ENCODE measurements at regions of chr7 and their contacts with region 1.

Region 1: DNA sequence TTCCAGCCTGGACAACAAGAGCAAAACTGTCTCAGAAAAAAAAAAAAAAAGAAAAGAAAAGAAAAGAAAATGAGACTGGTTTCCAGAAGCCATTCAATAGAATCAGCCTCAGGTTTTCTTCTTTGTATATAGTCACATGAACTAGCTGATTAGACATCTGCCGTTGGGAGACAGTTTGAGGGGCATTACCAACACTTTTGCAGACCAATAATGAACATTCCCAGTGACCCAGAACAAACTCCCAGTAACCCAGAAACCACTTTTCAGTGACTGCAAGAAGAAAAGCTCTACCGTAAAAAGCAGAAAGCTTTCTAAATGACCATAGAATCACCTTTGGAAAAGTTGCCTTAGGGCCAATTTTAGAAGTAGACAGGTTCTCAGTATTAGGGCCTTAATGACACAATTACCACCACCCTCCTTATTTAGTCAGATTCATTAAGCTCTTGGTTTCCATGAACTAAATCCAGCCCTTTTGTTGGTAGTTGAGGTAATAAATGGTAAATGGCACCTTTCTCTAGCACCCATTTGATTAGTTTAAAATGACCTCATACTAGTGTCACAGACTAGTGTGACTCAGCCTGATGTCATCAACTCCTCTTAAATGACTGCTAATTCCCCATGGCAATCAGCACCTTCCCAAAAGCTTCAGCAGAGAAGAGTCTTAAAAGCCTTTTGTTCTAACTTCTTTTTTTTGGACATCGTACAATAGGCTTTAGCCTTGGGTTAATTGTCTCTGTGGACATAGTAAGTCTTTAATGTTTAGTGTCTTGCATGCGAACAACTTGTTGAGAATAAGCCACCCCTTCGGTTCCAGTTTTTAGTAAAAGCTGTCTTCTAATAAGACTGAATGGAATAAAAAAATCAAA is 33.6 kb upstream of the XRCC2 start:
- ATAC-seq: peak in 5 of 8 experiments; percentile 82 to 91 (median 88)
- H3K4me3 ChIP-seq: no peak overlapping the region
- H3K27ac ChIP-seq: peak overlapping the region in 1 of 2 donors; percentile 19
- H3K4me1 ChIP-seq: peaks cover 0 to 10% of the 10 kb centered on the region in 2 donors

Region 2: GRCh38 chr7:152336754-152337368 is 372.7 kb before region 1 on chr7:
- in situ Hi-C with region 1: loop called in 1 of 9 experiments (anchors 25 kb)
- ATAC-seq: peak; percentile 33 to 88 (median 71)
- H3K4me3 ChIP-seq: no peak overlapping the region
- H3K27ac ChIP-seq: no peak overlapping the region
- H3K4me1 ChIP-seq: peaks cover 0 to 2% of the 10 kb centered on the region in 2 donors

Measured in motor neuron (in vitro differentiated cells).